ENCODE measurements at regions of chr9 and their contacts with region 1.

Region 1: DNA sequence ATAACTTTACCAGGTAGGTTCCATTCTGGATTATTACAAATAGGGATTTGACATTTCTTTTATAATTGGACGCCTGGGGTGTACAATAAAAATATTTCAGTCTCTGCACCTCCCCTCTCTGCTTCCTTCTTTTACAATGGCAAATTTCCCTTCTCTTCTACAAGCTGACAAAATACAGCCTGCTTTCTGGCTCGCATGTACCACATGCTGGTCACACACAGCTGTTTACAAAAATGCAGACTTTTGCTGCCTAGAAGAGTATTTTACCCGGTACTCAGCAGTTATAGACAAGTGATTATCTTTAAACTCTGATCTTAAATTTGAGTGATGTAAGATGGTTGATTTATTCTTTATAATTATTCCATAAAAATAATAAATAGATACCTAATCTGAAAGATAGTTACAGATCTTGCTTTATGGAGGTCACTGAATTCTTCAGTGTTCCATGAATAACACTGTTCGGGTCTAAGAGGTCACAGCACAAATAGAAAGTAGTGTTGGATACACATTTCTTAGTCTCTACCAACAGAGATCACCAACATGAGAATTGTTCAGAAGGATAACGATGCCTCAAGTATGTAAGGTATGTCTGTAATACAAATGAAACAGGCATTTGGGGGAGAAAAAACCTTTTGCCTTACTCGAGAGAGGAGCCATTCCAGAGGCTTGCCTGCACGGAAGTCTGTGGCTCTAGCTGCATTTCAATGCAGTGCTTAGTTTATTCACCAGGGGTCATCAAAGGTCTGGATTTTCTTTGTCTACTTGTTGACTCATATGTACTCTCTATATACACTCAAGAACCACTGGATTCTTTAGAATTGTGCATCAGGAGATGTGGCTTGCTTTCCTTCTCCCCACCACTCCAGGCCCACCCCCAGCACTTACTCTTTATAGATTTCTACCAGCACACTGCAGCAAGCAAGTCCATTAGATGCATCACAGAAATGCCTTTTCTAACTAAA is 206.6 kb upstream of the RFX3 start:
- DNase-seq: peak; percentile 76
- H3K4me3 ChIP-seq: peak overlapping the region; percentile 18; the same call in 1 of the 2 replicates
- H3K27ac ChIP-seq: no peak overlapping the region
- H3K27me3 ChIP-seq: no peaks in the 10 kb centered on the region
- CTCF ChIP-seq: peak; percentile 72

Region 2: DNA sequence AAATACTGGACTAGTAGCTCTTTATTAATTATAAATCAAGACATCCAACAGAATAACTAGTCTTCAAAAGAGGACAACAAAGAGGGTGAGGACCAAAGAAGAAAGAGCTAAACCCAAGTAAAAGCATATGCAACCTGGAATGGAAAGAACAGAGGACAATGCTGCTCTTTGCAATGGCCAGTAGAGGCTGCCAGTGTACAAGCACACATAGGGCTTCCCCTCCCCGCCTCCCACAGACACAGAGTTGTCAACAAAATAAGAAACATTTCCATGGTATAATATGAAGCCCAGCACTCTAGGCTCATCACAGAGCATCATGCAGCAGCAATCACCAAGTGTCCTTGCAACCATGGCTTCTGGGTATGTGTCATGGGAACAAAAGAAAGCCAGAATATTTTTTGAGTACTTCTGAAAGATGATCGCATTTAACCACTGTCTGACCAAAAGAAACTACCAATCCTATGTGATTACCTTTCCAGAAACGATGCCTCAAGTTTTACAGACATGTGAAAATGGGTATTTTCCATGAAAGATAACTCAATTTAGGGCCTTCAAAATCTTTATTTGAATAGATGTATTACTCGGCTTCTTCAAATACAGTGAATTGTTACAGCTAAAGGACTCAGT is 264.7 kb before region 1 on chr9:
- CTCF ChIA-PET with region 1: interaction called, 10 read pairs
- POLR2A ChIA-PET with region 1: no interaction called
- DNase-seq: peak; percentile 34
- H3K4me3 ChIP-seq: no peak overlapping the region
- H3K27ac ChIP-seq: no peak overlapping the region
- H3K27me3 ChIP-seq: no peaks in the 10 kb centered on the region
- CTCF ChIP-seq: peak; percentile 99

Region 3: DNA sequence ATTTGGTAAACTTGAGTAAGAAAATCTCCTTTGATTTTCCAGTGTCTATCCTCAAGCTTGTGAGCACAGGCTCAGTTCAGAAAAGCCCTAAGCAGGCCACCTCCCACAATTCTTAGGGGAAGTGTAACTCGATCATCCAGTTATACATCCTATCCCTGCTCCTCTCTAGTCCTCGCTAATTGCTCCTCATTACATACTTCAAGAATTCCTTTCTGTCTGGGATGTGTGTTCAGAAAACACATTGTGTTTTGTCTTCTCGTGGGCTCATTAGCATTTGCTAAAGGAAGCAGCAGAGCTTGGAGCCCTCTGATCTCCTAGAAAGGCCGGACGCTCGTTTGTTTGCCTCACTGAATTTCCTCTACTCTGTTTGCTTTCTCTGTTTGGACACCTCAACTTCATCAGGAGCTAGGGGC is 61.6 kb after region 1 on chr9:
- CTCF ChIA-PET with region 1: no interaction called
- POLR2A ChIA-PET with region 1: no interaction called
- DNase-seq: no peak
- H3K4me3 ChIP-seq: no peak overlapping the region
- H3K27ac ChIP-seq: no peak overlapping the region
- H3K27me3 ChIP-seq: no peaks in the 10 kb centered on the region
- CTCF ChIP-seq: no peak

Region 4: DNA sequence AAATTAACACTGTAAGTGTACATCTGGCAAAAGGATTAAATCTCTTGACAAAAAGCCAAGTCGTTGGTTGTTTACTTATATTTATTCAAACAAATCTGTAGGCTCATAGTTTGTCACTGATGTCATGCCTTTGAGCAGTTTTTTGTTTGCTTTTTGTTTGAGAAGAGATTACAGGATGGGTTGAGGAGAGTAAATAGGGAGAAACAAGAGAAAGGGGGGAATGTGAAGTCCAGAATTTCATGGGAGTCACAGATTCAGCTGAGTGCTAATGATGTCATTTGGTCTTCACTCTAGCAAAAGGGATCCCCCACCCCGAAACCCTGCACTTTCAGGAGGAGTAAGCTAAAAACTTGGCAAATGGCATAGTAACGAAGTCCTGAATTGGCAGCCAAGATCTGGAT is 230.1 kb after region 1 on chr9:
- CTCF ChIA-PET with region 1: no interaction called
- POLR2A ChIA-PET with region 1: no interaction called
- DNase-seq: peak; percentile 34
- H3K4me3 ChIP-seq: no peak overlapping the region
- H3K27ac ChIP-seq: peak overlapping the region; percentile 32
- H3K27me3 ChIP-seq: no peaks in the 10 kb centered on the region
- CTCF ChIP-seq: no peak

Region 5: GRCh38 chr9:4077499-4078102 is 345.2 kb after region 1 on chr9:
- CTCF ChIA-PET with region 1: interaction called, 14 read pairs
- POLR2A ChIA-PET with region 1: no interaction called
- DNase-seq: peak; percentile 29
- H3K4me3 ChIP-seq: no peak overlapping the region
- H3K27ac ChIP-seq: no peak overlapping the region
- H3K27me3 ChIP-seq: no peaks in the 10 kb centered on the region
- CTCF ChIP-seq: peak; percentile 70

Region 6: GRCh38 chr9:4228606-4229005 is 496.2 kb after region 1 on chr9:
- CTCF ChIA-PET with region 1: interaction called, 21 read pairs
- POLR2A ChIA-PET with region 1: no interaction called
- DNase-seq: no peak
- H3K4me3 ChIP-seq: no peak overlapping the region
- H3K27ac ChIP-seq: no peak overlapping the region
- H3K27me3 ChIP-seq: no peaks in the 10 kb centered on the region
- CTCF ChIP-seq: peak; percentile 69

Region 7: GRCh38 chr9:4366591-4367330 is 634.4 kb after region 1 on chr9:
- CTCF ChIA-PET with region 1: interaction called, 16 read pairs
- POLR2A ChIA-PET with region 1: no interaction called
- DNase-seq: peak; percentile 24
- H3K4me3 ChIP-seq: no peak overlapping the region
- H3K27ac ChIP-seq: no peak overlapping the region
- H3K27me3 ChIP-seq: peaks cover 5% of the 10 kb centered on the region
- CTCF ChIP-seq: peak; percentile 87